Panc1 (cell line): ENCODE measurements at regions of chr2 and their contacts with region 1.

Region 1: DNA sequence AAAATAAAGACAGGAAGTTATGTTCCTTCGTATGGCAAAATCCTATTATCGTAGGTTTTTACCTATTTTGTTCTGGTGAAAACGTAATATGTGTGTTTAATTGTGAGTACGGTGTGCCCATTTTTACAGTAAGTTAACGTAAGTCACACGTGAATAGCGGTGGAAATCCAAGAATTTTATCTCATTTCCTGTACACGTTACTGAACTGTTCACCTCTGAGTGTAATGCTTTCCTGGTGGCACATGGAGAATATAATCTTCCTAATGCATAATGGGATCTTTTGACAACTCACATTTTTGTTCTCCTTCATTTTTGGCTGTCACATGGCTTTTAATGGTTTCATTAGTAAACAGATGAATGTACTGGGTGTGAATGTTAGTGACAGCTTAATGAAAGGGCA is 28.2 kb downstream of the BCL2L11 start:
- DNase-seq: no peak
- ATAC-seq: no peak
- H3K4me3 ChIP-seq: no peak overlapping the region
- H3K27ac ChIP-seq: no peak overlapping the region
- H3K4me1 ChIP-seq: 0 out of 2 replicates have a peak, but pooled peaks cover 3% of the 10 kb centered on the region
- H3K27me3 ChIP-seq: no peaks in the 10 kb centered on the region
- CTCF ChIP-seq: no peak

Region 2: DNA sequence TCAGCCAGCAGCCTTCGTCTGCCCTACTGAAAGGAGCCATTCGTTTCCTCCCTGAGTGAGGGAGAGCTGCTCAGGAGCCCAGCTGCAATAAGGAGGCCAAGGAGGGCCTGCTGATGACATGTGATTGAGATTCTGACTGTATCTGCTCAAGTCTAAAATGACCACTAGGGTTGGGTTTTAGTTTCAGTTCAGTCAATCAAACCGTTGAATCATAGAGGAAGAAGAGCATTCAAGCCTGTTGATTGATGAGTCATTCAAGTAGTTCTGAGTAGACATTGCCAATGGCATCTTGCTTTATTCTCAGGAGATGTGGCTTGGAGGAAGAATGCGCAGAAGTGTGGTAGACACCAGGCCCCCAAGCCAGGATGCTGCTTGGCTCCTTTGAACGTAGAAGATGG is 48.2 kb before region 1 on chr2:
- CTCF ChIA-PET with region 1: no interaction called
- POLR2A ChIA-PET with region 1: no interaction called
- in situ Hi-C with region 1: no loop called
- intact Hi-C with region 1: no loop called
- DNase-seq: no peak
- ATAC-seq: no peak
- H3K4me3 ChIP-seq: no peak overlapping the region
- H3K27ac ChIP-seq: no peak overlapping the region
- H3K4me1 ChIP-seq: no peaks in the 10 kb centered on the region
- H3K27me3 ChIP-seq: no peaks in the 10 kb centered on the region
- CTCF ChIP-seq: no peak

Region 3: DNA sequence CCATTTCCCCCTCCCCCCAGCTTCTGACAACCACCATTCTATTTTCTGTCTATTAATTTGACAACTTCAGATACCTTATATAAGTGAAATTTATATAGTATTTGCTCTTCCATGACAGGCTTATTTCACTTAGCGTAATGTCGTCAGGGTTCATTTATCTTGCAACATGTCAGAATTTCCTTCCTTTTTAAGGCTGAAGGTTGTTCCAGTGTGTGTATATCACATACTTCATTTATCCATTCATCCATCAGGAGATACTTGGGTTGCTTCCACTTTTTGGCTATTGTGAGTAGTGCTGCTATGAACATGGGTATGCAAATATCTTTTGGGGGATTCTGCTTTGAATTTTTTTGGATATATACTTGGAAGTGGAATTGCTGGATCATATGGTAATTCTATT is 20.8 kb before region 1 on chr2:
- CTCF ChIA-PET with region 1: no interaction called
- POLR2A ChIA-PET with region 1: no interaction called
- in situ Hi-C with region 1: no loop called
- intact Hi-C with region 1: no loop called
- DNase-seq: no peak
- ATAC-seq: no peak
- H3K4me3 ChIP-seq: no peak overlapping the region
- H3K27ac ChIP-seq: no peak overlapping the region
- H3K4me1 ChIP-seq: peaks cover 15% of the 10 kb centered on the region
- H3K27me3 ChIP-seq: no peaks in the 10 kb centered on the region
- CTCF ChIP-seq: no peak

Region 4: DNA sequence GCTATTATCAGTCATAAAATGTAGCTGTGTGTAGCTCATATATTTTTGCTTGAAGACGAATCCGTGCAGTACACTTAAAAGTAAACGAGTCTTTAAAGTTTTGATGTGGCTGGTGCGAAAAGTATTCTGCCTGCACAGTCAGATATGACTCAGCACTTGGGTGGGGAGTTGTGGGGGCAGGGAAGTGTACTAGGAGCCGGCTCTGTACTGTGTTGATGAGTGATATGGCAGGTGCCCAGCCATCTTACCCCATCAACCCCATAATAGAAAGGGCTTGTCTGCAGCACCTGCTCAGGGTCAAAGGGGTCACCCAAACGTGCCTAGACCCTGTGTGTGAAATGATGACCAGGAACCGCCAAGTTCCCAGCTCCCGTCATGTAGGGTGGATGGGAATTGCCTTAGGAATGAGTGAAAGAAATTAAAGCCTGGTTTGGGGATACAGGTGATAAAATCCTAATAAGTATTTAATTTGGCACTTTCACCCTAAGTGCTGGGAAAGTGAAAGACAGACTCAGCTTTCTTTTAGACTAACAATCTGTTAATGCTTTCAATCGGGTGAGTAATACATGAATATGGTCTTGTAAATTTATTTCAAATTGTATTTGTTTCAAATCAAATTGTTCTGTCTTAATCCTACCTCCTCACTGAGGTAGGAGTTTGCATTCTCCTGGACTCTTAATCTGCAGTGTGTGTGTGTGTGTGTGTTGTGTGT is 19.8 kb after region 1 on chr2:
- CTCF ChIA-PET with region 1: interaction called, 10 read pairs
- POLR2A ChIA-PET with region 1: no interaction called
- in situ Hi-C with region 1: no loop called
- intact Hi-C with region 1: no loop called
- DNase-seq: peak; percentile 32
- ATAC-seq: peak; percentile 83
- H3K4me3 ChIP-seq: no peak overlapping the region
- H3K27ac ChIP-seq: no peak overlapping the region
- H3K4me1 ChIP-seq: peaks cover 19% of the 10 kb centered on the region
- H3K27me3 ChIP-seq: no peaks in the 10 kb centered on the region
- CTCF ChIP-seq: no peak